Activated CD4-positive, alpha-beta T cell treated with anti-CD3 and anti-CD28 coated beads for 36 hours (primary cell): ENCODE measurements at regions of chr9 and their contacts with region 1.

Region 1: DNA sequence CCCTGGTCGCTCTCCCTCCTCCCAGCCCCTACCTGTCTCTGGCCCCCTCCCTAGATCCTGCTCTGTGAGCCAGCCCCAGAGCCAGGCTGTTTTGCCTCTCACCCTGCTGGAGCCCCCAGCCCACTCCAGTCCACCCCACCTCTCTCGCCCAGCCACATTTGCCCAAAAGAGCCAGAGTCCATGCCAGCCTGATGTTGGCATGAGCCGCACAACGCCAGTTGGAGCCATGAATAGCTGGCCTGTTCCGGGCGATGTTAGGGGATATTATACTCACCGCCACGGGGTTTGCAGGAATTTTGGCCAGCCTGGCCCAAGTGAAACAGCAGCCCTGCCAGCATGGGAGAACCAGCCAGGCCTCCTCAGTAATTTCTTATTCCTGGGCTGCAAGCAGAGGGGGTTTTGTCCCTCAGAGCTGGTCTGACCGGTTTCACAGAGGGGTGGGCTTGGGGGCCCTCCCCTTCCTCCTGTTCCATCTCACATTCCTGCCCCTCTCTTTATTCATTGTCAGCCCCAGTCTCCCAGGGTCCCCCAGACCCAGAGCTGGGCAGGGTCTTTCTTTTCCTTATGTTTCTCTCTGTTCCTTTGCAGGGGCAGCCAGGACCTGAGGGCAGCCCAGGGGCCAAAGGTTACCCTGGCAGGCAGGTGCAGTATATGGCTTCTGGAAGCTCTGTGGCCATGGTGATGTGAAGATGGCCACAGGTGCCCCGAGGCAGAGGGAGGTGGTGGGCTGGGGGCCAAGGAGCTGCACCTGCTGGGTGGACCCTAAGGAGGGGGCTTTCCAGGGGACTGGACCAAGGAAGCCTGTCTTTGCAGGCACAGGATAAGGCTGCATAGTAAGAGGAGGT is 50.1 kb downstream of the COL27A1 start:
- DNase-seq: no peak
- ATAC-seq: no peak
- H3K4me3 Mint-ChIP-seq: no peak overlapping the region
- H3K27ac Mint-ChIP-seq: no peak overlapping the region
- H3K4me1 Mint-ChIP-seq: no peaks in the 10 kb centered on the region
- H3K27me3 Mint-ChIP-seq: no peaks in the 10 kb centered on the region

Region 2: GRCh38 chr9:114224247-114224610 is 18.8 kb after region 1 on chr9:
- CTCF ChIA-PET with region 1: no interaction called
- POLR2A ChIA-PET with region 1: no interaction called
- intact Hi-C with region 1: loop called in 1 of 2 experiments (anchors 2 kb)
- DNase-seq: no peak
- ATAC-seq: no peak
- H3K4me3 Mint-ChIP-seq: no peak overlapping the region
- H3K27ac Mint-ChIP-seq: no peak overlapping the region
- H3K4me1 Mint-ChIP-seq: no peaks in the 10 kb centered on the region
- H3K27me3 Mint-ChIP-seq: peaks cover 2% of the 10 kb centered on the region

Region 3: GRCh38 chr9:114671605-114672004 is 466.2 kb after region 1 on chr9:
- CTCF ChIA-PET with region 1: no interaction called
- POLR2A ChIA-PET with region 1: no interaction called
- intact Hi-C with region 1: no loop called
- DNase-seq: no peak
- ATAC-seq: no peak
- H3K4me3 Mint-ChIP-seq: no peak overlapping the region
- H3K27ac Mint-ChIP-seq: no peak overlapping the region
- H3K4me1 Mint-ChIP-seq: peaks cover 26% of the 10 kb centered on the region
- H3K27me3 Mint-ChIP-seq: peaks cover 4% of the 10 kb centered on the region